ENCODE measurements at regions of chr6 and their contacts with region 1.

Region 1: DNA sequence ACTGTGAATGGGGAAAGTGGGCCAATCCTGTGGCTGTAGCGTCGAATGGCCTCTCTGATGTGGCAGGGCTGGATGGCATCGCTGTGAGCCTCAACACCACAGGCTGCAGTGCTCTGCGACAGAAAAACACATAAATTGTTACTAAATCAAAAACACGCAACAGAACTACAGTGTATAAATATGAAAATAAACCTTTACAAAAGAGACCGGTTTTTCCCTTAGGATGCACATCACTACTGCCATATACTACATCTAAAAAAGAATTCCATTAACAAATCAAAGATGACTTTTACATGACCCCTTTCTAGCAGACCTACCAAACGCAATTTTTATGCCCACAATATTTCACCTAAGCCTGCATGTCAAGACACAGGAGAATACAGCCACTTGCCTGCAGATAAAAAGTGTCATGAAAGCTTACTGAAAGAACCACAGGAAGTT is 395.5 kb upstream of the RUNX2 start:
- DNase-seq: no peak
- ATAC-seq: peak; percentile 54
- H3K4me3 ChIP-seq: no peak overlapping the region
- H3K27ac ChIP-seq: peak overlapping the region; percentile 31
- H3K4me1 ChIP-seq: no peaks in the 10 kb centered on the region
- H3K27me3 ChIP-seq: no peaks in the 10 kb centered on the region
- CTCF ChIP-seq: no peak
- EP300 ChIP-seq: no peak
- POLR2A ChIP-seq: no peak
- RAD21 ChIP-seq: no peak

Region 2: GRCh38 chr6:44667668-44668390 is 264.8 kb before region 1 on chr6:
- CTCF ChIA-PET with region 1: no interaction called
- POLR2A ChIA-PET with region 1: interaction called, 4 read pairs
- RAD21 ChIA-PET with region 1: interaction called, 3 read pairs
- SMC1A ChIA-PET with region 1: no interaction called
- in situ Hi-C with region 1: no loop called
- intact Hi-C with region 1: loop called (anchors 10 kb)
- DNase-seq: no peak
- ATAC-seq: peak; percentile 89
- H3K4me3 ChIP-seq: no peak overlapping the region
- H3K27ac ChIP-seq: no peak overlapping the region
- H3K4me1 ChIP-seq: no peaks in the 10 kb centered on the region
- H3K27me3 ChIP-seq: no peaks in the 10 kb centered on the region; a peak in 1 of 4 replicates
- CTCF ChIP-seq: peak; percentile 67 to 89 (median 83)
- EP300 ChIP-seq: no peak
- POLR2A ChIP-seq: no peak
- RAD21 ChIP-seq: peak; percentile 65

Region 3: DNA sequence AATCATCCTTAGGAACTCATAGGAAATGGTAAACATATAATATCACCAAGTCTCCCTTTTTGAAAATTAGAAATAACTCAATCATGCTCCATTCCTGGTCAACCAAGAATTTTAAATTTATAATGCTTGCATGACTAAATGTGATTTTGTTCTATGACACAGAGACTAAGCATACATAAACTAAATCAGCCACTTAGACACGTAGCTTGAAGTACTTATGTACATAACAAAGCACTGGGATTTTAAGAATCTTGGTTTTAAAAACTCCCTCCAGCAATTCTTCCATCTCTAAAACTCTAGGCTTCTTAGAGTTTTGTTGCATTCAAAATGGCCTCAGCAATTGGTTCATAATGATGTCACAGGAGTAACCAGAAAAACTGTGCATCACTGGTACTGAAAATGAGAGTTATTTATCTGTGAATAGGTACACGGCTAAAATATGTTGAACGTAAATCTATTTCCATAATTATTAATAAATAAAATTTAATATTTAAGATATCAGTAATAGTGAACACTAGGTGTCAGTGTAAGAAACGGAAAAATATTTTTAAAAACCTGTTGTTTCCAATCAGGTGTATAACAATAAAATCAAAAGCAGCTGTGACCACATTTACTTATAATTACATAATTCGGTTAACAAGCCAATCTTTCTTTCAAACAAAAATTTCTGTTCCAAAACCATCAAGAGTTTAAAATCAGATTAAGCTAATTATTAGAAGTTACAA is 153.9 kb after region 1 on chr6:
- CTCF ChIA-PET with region 1: no interaction called
- POLR2A ChIA-PET with region 1: no interaction called
- RAD21 ChIA-PET with region 1: no interaction called
- SMC1A ChIA-PET with region 1: no interaction called
- in situ Hi-C with region 1: no loop called
- intact Hi-C with region 1: no loop called
- DNase-seq: no peak
- ATAC-seq: no peak
- H3K4me3 ChIP-seq: no peak overlapping the region
- H3K27ac ChIP-seq: no peak overlapping the region
- H3K4me1 ChIP-seq: no peaks in the 10 kb centered on the region
- H3K27me3 ChIP-seq: no peaks in the 10 kb centered on the region; a peak in 1 of 4 replicates
- CTCF ChIP-seq: no peak
- EP300 ChIP-seq: no peak
- POLR2A ChIP-seq: no peak
- RAD21 ChIP-seq: no peak

Measured in GM12878 (cell line).